Activated CD4-positive, alpha-beta T cell treated with anti-CD3 and anti-CD28 coated beads, Interleukin-2, amount 10 ng/mL, durations not matched to agents 24 days and 14 days (primary cell): ENCODE measurements at regions of chr7 and their contacts with region 1.

Region 1: DNA sequence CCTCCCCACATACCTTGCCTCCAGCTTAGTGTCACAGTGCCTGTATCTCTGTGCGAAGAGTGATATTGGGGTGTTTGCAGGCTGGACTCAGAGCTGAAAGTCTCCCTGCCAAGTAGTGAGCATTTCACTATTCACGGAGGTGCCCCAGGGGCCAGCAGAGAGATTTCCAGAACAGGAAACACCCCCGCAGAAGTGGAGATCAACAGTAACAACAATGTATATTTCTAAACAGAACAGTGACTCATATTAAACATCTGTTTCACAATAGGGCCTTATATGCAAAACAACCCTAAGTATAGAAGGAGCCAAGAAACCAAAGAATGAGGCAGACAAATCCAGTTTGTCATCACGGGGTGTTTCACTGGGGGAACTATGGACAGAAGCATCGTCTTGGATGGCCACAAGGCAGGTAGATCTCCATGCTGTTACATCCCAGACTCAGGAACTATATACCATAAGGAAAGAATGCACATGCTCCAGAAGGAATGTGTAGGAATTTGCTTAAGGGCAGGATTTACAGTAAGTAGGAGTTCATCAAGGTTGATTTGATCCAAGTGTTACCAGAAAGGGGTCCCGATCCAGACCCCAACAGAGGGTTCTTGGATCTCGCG is 29.3 kb upstream of the CCL24 start:
- DNase-seq: peak; percentile 70
- H3K4me3 Mint-ChIP-seq: peak overlapping the region; percentile 66
- H3K27ac Mint-ChIP-seq: peak overlapping the region; percentile 95
- H3K4me1 Mint-ChIP-seq: peaks cover 18% of the 10 kb centered on the region
- H3K27me3 Mint-ChIP-seq: no peaks in the 10 kb centered on the region

Region 2: DNA sequence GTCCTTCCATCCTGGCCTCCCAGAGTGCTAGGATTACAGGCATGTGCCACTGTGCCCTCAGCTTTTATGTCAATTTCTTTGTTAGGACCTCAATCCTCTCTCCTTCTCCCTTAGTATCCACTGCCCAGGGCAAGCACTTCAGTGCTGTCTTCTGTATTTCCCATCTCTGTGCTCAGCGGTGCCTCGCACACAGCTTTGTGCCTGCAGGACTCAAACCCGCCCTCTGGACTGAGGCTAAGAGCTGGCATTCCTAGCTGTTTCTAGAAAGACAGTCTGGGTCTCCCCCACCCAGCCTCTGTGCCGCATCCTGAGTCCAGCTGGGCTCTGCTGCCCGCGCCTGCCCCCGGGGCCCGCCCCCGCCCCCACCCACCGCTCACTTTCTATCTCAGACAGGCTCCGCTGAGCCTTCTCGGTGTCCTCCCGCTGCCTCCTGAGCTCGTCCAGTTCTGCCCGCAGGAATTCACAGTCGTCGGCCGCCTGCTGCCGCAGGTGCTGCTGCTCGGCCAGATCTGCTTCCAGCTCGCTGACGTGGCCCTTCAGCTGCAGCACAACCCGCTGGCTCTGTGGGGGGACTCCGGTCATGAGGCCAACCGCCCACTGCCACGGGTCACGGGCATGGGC is 283.5 kb before region 1 on chr7:
- intact Hi-C with region 1: no loop called
- DNase-seq: no peak
- H3K4me3 Mint-ChIP-seq: no peak overlapping the region
- H3K27ac Mint-ChIP-seq: no peak overlapping the region
- H3K4me1 Mint-ChIP-seq: no peaks in the 10 kb centered on the region
- H3K27me3 Mint-ChIP-seq: no peaks in the 10 kb centered on the region

Region 3: DNA sequence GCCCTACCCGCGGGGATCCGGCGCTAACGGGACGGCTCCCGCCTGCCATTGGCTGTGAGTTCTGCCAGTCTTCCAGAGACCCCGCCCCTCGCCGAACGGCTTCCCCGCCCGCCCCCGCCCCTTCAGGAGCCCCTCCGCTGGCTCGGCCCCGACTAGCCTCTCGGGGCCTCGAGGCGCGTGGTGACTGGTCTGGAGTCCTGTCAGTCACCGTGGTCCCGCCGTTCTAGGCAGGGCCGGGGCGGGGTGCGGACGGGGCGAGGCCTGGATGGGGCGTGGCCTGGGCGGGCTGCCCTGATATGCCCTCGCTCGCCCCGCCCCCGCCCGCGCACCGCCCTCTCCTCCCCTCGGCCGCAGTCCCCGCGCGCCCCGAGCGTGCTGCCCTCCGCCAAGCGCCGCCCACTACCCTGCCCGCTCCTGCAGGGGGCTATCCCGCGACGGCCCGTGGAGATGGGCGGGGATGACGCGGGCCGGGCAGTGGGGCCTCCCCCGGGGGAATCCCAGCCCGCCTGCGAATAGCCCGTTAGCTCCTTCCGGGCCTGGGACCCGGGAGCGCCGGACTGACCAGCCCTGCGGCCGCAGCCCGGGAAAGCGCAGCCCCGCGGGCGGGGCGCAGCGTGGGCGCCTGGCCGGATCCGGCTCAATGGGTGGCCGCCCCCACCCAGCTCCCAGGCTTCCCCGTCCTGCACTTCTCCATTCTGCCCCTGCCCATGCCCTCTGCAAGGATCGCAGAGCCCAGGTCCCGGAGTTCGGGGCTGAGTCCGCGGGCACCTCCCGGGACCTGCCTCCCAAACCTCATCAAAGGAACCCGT is 103.8 kb before region 1 on chr7:
- intact Hi-C with region 1: loop called (anchors 2 kb)
- DNase-seq: peak; percentile 100
- H3K4me3 Mint-ChIP-seq: peak overlapping the region; percentile 90
- H3K27ac Mint-ChIP-seq: peak overlapping the region; percentile 97
- H3K4me1 Mint-ChIP-seq: peaks cover 16% of the 10 kb centered on the region
- H3K27me3 Mint-ChIP-seq: peaks cover 25% of the 10 kb centered on the region

Region 4: DNA sequence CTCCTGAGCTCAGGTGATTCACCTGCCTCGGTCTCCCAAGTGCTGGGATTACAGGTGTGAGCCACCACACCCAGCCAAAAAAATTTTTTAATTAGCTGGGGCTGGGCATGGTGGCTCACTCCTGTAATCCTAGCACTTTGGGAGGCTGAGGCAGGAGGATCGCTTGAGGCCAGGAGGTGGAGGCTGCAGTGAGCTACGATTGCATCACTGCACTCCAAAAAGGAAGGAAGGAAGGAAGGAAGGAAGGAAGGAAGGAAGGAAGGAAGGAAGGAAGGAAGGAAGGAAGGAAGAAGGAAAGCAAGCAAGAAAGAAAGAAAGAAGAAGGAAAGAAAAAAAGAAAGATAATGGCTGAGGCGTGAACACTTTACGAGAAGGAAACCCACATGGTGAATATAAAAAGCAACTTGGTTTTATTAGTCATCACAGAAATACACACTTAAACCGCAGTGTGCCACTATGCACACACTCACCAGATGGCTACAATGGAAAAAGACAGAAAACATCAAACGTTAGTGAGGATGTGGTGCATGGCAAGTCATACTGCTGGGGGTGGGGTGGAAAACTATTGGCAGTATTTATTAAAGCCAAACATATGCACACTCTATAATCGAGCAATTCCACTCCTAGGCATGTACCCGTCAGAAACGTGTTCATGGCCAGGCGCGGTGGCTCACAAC is 66.5 kb before region 1 on chr7:
- intact Hi-C with region 1: loop called (anchors 1 kb)
- DNase-seq: peak; percentile 77
- H3K4me3 Mint-ChIP-seq: peak overlapping the region; percentile 9
- H3K27ac Mint-ChIP-seq: peak overlapping the region; percentile 83
- H3K4me1 Mint-ChIP-seq: peaks cover 31% of the 10 kb centered on the region
- H3K27me3 Mint-ChIP-seq: peaks cover 15% of the 10 kb centered on the region